Breast epithelium (tissue), 4 donors: ENCODE measurements at regions of chr13 and their contacts with region 1.

Region 1: DNA sequence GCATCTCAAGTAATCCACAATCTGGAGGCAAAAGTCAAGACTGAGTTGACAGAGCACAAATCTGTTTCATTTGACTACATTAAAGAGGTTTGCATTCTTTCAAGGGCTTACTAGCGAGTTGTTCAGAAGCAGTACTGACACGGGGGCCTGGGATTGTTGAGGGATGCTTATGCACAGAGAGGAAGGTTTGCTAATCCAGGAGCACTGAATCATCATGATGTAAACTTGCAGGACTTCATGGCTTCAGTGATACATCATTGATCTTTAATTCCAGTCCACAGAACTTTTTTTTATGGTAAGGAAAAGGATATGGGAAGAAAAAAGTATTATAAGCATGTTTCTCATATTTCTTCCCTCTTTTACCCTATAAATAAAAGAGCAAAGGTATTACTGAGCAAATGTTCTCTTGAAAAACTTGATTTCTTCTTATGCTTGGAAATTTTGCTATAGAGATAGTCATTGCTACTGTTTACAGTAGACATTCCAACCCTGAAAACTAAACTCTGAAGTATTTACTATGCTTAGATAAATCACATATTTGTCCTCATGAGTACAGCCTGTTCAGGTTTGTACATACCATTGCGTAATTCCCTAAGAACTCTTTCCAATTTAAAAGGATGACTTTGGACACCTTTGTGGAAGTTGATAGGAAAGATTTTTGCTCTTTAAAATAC is 65.8 kb upstream of the KPNA3 start:
- DNase-seq: no peak
- H3K4me3 ChIP-seq: no peak overlapping the region
- H3K27ac ChIP-seq: peak overlapping the region in 1 of 2 donors; percentile 1
- H3K4me1 ChIP-seq: no peaks in the 10 kb centered on the region
- H3K27me3 ChIP-seq: no peaks in the 10 kb centered on the region
- CTCF ChIP-seq: no peak
- POLR2A ChIP-seq: no peak

Region 2: DNA sequence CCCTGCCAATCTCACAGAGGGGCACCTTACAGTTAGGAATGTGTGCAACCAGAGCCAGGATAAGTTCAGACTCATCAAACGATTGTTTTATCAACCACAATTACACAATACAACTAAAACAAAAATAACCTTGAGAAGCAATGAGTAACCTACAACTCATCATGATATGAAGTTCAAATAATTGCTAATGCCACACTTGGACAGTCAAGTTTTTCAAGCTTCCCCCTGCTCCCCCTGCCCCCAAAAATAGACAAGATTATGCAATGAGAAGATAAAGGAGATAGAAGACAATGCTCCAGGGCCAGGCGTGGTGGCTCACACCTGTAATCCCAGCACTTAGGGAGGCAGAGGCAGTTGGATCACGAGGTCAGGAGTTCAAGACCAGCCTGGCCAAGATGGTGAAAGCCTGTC is 52.2 kb before region 1 on chr13:
- intact Hi-C with region 1: loop called (anchors 2 kb)
- DNase-seq: no peak
- H3K4me3 ChIP-seq: no peak overlapping the region
- H3K27ac ChIP-seq: no peak overlapping the region
- H3K4me1 ChIP-seq: no peaks in the 10 kb centered on the region
- H3K27me3 ChIP-seq: no peaks in the 10 kb centered on the region
- CTCF ChIP-seq: no peak
- POLR2A ChIP-seq: no peak

Region 3: GRCh38 chr13:50474088-50474662 is 615.9 kb after region 1 on chr13:
- intact Hi-C with region 1: no loop called
- DNase-seq: no peak
- H3K4me3 ChIP-seq: no peak overlapping the region
- H3K27ac ChIP-seq: no peak overlapping the region
- H3K4me1 ChIP-seq: no peaks in the 10 kb centered on the region
- H3K27me3 ChIP-seq: no peaks in the 10 kb centered on the region
- CTCF ChIP-seq: no peak
- POLR2A ChIP-seq: no peak